MCF 10A (cell line): ENCODE measurements at regions of chr9 and their contacts with region 1.

Region 1: GRCh38 chr9:104808035-104808614 is 44.2 kb downstream of the NIPSNAP3B start:
- DNase-seq: peak; percentile 63
- H3K4me3 Mint-ChIP-seq: no peak overlapping the region
- H3K27ac Mint-ChIP-seq: no peak overlapping the region
- H3K4me1 Mint-ChIP-seq: peaks cover 19% of the 10 kb centered on the region
- H3K27me3 Mint-ChIP-seq: no peaks in the 10 kb centered on the region
- CTCF ChIP-seq: peak; percentile 19

Region 2: DNA sequence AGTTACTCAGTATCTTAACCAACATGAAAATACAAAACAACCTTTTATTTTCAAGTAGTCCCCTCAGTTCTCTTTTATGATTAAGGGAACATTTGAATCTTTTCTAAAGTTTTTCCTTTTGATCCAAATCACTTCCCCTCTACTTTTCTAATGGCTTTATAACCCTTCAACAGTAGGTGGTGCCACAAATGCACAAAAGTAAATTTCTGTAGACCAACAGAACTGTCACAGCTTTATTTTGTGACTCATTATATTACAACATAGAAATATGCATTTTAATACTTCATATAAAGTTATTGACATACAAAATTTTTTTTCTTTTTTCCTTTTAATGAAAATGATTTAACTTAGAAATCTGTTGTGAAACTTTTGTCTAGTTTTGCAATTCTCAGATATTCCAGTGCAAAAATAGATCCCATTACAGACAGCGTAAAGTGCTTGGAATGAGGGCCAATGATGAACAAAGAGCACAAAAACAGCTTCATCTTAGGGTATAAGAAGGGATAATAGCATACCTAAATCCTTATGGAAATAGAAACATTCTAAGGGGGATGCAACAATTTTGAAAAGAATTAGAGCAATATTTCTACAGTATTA is 27.2 kb before region 1 on chr9:
- CTCF ChIA-PET with region 1: interaction called, 10 read pairs
- POLR2A ChIA-PET with region 1: no interaction called
- intact Hi-C with region 1: loop called (anchors 1 kb)
- DNase-seq: peak; percentile 71
- H3K4me3 Mint-ChIP-seq: no peak overlapping the region
- H3K27ac Mint-ChIP-seq: no peak overlapping the region
- H3K4me1 Mint-ChIP-seq: no peaks in the 10 kb centered on the region
- H3K27me3 Mint-ChIP-seq: no peaks in the 10 kb centered on the region
- CTCF ChIP-seq: peak; percentile 45

Region 3: DNA sequence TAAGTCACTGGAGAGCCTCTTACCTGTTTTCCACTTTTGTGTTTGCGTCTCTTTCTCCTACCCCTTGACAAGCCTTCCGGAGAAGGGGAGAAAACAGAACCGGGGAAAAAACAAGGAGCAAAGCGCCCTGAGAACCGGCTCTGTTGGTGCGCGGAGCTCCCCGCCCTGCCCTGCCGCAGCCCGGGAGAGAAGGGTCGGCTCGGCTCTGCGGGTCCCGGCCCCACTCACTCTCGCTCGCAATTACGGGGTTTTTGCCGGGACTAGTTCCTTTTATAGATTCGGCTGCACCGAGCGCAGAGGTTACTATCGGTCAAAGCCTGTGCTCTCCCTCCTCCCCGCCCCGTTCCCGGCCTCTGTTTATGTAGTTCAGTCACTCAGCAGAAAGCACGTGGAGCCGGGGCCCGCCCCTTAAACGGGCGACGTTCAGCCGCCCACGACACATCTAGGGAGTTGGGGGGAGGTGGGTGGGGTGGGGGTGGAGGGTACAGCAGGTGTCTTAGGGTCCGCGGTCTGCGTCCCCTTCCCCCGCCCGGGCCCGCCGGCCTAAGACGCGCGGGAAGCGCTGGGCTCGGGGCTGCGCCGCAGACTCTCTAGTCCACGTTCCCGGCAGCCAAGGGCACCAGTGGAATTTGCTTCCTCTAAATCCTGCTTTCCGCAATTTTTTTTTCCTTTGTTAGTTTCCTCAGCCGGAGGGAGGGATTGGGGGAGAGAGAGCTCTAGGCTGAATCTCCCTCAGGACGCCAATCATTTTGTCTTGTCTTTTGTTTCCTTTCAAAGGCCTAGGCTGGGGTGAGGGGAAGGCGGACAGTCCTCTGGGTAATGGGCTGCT is 120.0 kb after region 1 on chr9 and contains the start of gene ABCA1:
- CTCF ChIA-PET with region 1: no interaction called
- POLR2A ChIA-PET with region 1: no interaction called
- intact Hi-C with region 1: loop called (anchors 10 kb)
- DNase-seq: peak; percentile 46
- H3K4me3 Mint-ChIP-seq: peak within 1 kb of the TSS; percentile 68
- H3K27ac Mint-ChIP-seq: no peak within 1 kb of the TSS
- H3K4me1 Mint-ChIP-seq: peaks cover 3% of the 10 kb centered on the region
- H3K27me3 Mint-ChIP-seq: no peaks in the 10 kb centered on the region
- CTCF ChIP-seq: no peak
- total RNA-seq, gene ABCA1: 0.15 and 0.28 TPM in 2 replicates

Region 4: DNA sequence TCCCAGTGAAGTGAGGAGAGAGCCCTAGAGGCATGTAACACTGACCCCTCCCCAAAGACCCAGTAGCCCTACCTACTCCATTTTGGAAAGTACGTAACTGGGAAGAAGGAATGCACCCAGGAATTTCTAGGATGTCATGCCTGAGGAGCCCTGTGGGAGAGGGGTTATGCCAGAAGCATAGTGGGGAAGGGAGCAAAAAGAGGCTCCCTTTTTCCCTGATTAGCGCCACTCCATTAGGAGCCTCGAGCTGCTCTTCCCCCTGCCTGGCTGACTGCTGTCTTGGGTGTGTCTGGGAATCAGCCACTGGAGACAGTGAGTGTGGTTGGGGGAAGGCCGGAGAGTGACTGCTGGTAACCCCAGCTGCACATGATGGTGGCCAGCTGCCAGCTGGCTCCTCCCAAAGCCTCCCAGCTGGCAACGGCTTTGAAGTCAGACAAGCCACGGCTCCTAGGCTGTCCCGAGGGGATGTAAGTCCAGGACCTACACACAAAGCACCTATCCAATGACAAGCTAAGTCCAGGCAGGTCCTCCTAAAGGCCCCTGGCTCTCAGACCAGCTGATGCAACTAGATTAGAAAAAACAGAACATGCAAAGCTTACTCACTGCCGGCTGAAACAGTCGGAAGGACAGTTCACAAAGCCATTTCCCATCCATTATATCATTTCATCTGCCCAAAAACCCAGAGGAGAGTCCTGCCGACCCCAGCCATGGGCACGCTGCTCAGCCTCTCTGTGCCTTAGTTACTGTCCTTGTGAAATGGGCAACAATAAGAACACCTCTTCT is 256.4 kb after region 1 on chr9:
- CTCF ChIA-PET with region 1: no interaction called
- POLR2A ChIA-PET with region 1: no interaction called
- intact Hi-C with region 1: no loop called
- DNase-seq: peak; percentile 97
- H3K4me3 Mint-ChIP-seq: peak overlapping the region; percentile 47
- H3K27ac Mint-ChIP-seq: peak overlapping the region; percentile 92
- H3K4me1 Mint-ChIP-seq: peaks cover 16% of the 10 kb centered on the region
- H3K27me3 Mint-ChIP-seq: no peaks in the 10 kb centered on the region
- CTCF ChIP-seq: no peak